B cell (primary cell): ENCODE measurements at regions of chr19 and their contacts with region 1.

Region 1: DNA sequence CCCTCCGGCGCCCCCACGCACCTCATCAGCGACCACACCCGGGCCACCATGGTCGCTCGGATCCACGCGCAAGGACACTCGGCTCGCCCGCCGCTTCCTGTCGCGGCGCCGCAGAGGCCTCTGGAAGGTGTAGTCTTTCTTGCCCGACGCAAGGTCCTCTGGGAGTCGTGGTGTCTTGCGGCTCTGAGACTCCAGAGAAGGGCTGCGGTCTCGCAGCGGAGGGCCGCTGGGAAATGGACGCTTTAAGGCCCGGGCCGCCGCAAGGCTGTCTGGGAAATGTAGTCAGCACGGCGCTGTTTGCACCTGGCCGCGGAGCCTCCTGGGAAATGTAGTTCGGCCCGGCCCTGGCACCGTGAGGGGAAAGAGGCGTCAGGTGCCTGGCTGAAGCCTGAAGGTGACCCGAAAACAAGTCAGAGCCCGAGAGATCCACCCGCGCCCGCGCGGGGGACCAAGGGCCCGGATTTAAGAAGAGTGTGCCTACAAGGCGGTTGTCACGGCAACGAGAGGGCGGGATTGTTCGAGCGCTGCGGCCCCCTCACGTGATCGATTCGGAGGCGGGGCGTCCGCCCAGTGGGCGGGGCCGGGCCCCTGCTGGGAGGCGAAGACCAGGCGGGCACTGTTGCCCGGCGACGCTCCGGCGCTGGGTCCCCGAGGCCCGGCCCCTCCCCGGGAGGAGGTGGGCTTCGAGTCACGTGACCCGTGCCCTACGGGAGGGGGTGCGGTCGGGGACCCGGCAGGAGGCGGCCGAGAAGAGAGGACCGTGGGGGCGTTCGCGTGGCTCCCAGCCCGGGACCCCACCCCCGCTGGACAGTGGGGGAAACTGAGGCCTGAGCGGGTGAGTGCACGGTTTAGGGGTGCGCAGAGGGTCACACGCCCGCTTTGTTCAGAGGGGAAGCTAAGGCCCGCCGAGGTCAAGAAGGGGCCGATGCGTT is at the starts of genes HSD11B1L and MICOS13:
- DNase-seq: peak; percentile 100
- ATAC-seq: peak; percentile 93
- H3K4me3 ChIP-seq: peak within 1 kb of the TSS; percentile 65 to 100 (median 81)
- H3K4me3 Mint-ChIP-seq: peak within 1 kb of the TSS; percentile 93
- H3K27ac ChIP-seq: peak within 1 kb of the TSS; percentile 96 to 98
- H3K27ac Mint-ChIP-seq: peak within 1 kb of the TSS; percentile 99
- H3K4me1 ChIP-seq: peaks cover 14 to 17% of the 10 kb centered on the region in 2 donors
- H3K4me1 Mint-ChIP-seq: peaks cover 25% of the 10 kb centered on the region
- H3K27me3 ChIP-seq: no peaks in the 10 kb centered on the region
- H3K27me3 Mint-ChIP-seq: no peaks in the 10 kb centered on the region
- CTCF ChIP-seq: no peak
- total RNA-seq, gene HSD11B1L: 1.4 and 1.8 TPM in 2 replicates
- total RNA-seq, gene MICOS13: 30.8 and 34.5 TPM in 2 replicates

Region 2: DNA sequence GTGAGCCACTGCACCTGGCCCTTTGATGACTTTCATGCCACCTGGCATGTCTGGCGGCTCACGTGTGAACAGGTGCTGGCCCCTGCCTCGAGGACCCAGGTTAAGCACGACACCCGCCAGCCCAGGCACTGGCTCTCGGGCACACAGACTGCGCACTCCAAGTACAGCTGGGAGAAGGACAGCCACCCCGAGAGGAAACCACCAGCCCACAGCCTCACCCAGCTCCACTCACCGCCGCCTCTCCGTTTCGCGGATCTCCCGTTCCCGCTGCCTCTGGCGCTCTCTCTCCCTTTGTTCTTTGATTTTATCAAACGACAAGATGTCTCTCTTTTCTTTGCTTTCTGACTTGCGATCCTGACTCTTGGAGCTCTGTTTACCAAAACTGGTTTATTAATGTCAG is 85.6 kb before region 1 on chr19:
- CTCF ChIA-PET with region 1: no interaction called
- POLR2A ChIA-PET with region 1: no interaction called
- intact Hi-C with region 1: no loop called
- DNase-seq: no peak
- ATAC-seq: no peak
- H3K4me3 ChIP-seq: no peak overlapping the region
- H3K4me3 Mint-ChIP-seq: no peak overlapping the region
- H3K27ac ChIP-seq: no peak overlapping the region
- H3K27ac Mint-ChIP-seq: no peak overlapping the region
- H3K4me1 ChIP-seq: no peaks in the 10 kb centered on the region
- H3K4me1 Mint-ChIP-seq: no peaks in the 10 kb centered on the region
- H3K27me3 ChIP-seq: no peaks in the 10 kb centered on the region
- H3K27me3 Mint-ChIP-seq: no peaks in the 10 kb centered on the region
- CTCF ChIP-seq: no peak

Region 3: GRCh38 chr19:5707576-5708575 is 27.2 kb after region 1 on chr19:
- CTCF ChIA-PET with region 1: no interaction called
- POLR2A ChIA-PET with region 1: interaction called, 10 read pairs
- intact Hi-C with region 1: no loop called
- DNase-seq: peak; percentile 30
- ATAC-seq: no peak
- H3K4me3 ChIP-seq: no peak overlapping the region
- H3K4me3 Mint-ChIP-seq: no peak overlapping the region
- H3K27ac ChIP-seq: no peak overlapping the region
- H3K27ac Mint-ChIP-seq: no peak overlapping the region
- H3K4me1 ChIP-seq: no peaks in the 10 kb centered on the region
- H3K4me1 Mint-ChIP-seq: no peaks in the 10 kb centered on the region
- H3K27me3 ChIP-seq: no peaks in the 10 kb centered on the region
- H3K27me3 Mint-ChIP-seq: no peaks in the 10 kb centered on the region
- CTCF ChIP-seq: no peak

Region 4: DNA sequence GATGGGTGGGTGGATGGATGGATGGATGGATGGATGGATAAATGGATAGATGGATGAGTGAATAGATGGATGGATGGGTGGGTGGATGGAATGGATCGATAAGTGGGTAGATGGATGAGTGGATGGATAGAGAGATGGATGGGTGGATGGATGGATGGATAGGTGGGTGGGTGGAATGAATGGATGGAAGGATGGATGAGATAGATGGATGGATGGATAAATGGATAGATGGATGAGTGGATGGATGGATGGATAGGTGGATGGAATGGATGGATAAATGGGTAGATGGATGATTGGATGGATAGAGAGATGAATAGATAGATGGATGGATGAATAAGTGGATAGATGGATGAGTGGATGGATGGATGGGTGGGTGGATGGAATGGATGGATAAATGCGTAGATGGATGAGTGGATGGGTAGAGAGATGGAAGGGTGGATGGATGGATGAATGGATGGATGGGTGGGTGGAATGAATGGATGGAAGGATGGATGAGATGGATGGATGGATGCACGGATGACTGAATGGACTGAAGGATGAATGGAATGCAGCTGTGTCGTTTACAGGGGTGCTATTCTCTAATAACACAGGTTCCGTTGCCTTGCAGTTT is 82.0 kb after region 1 on chr19:
- CTCF ChIA-PET with region 1: no interaction called
- POLR2A ChIA-PET with region 1: no interaction called
- intact Hi-C with region 1: no loop called
- DNase-seq: no peak
- ATAC-seq: no peak
- H3K4me3 ChIP-seq: no peak overlapping the region
- H3K4me3 Mint-ChIP-seq: no peak overlapping the region
- H3K27ac ChIP-seq: no peak overlapping the region
- H3K27ac Mint-ChIP-seq: no peak overlapping the region
- H3K4me1 ChIP-seq: no peaks in the 10 kb centered on the region
- H3K4me1 Mint-ChIP-seq: no peaks in the 10 kb centered on the region
- H3K27me3 ChIP-seq: peaks cover 0 to 3% (median 0%) of the 10 kb centered on the region in 4 experiments
- H3K27me3 Mint-ChIP-seq: peaks cover 6% of the 10 kb centered on the region
- CTCF ChIP-seq: no peak